Activated CD8-positive, alpha-beta memory T cell treated with anti-CD3 and anti-CD28 coated beads, Interleukin-2, amount 10 ng/mL, durations not matched to agents 7 days and 5 days (primary cell): ENCODE measurements at regions of chr2 and their contacts with region 1.

Region 1: DNA sequence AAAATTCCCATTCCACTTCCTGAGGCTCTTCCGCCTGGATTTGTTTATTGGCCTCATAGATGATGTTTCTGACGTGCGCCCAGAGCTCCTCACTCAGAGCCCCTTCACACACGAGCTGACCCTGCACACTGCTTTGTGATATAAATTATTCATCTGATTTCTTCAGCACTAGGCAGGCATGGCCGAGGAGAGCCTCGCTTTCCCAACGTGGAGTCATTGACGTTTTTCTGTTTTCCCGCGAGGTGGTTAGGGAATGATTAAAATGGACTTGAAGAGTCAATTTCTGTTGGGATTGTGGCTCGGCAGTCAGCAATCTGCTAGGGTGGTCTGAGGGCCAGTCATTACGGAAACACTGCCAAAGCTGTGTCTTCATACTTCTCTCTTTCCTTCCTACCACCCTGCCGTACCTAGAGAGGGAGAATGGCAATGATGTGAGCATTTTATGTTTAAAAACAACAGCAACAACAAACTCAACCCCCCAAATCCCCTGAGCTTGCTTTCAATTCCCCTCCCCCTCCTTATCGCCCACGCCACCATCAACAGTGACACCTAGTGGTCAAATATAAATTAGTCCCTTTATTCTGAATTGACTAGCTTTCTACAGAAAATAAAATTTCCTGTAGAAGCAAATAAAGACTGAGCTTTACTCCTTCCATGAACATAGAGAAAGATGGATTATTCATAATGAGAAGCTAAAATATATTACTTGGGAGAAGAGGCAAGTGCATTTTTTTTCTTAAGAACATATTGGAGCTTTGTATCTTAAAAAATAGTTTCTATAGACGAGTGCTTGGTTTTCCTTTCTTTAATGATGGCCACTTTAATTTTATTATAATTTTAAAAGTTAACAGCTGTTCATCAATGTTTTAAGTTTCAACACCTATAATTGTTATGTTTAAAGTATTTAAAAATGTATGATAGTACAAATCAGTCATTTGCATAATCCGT is 285.1 kb downstream of the MTX2 start:
- DNase-seq: peak; percentile 50
- ATAC-seq: peak; percentile 39
- H3K4me3 Mint-ChIP-seq: peak overlapping the region; percentile 59
- H3K27ac Mint-ChIP-seq: no peak overlapping the region
- H3K4me1 Mint-ChIP-seq: peaks cover 13% of the 10 kb centered on the region
- H3K27me3 Mint-ChIP-seq: peaks cover 58% of the 10 kb centered on the region

Region 2: GRCh38 chr2:176126929-176127773 is 427.2 kb before region 1 on chr2:
- CTCF ChIA-PET with region 1: interaction called, 10 read pairs
- DNase-seq: peak; percentile 68
- ATAC-seq: no peak
- H3K4me3 Mint-ChIP-seq: no peak overlapping the region
- H3K27ac Mint-ChIP-seq: no peak overlapping the region
- H3K4me1 Mint-ChIP-seq: peaks cover 7% of the 10 kb centered on the region
- H3K27me3 Mint-ChIP-seq: peaks cover 84% of the 10 kb centered on the region

Region 3: GRCh38 chr2:176454893-176455811 is 99.2 kb before region 1 on chr2:
- CTCF ChIA-PET with region 1: interaction called, 35 read pairs
- DNase-seq: peak; percentile 83
- ATAC-seq: peak; percentile 72
- H3K4me3 Mint-ChIP-seq: no peak overlapping the region
- H3K27ac Mint-ChIP-seq: no peak overlapping the region
- H3K4me1 Mint-ChIP-seq: peaks cover 1% of the 10 kb centered on the region
- H3K27me3 Mint-ChIP-seq: peaks cover 40% of the 10 kb centered on the region

Region 4: GRCh38 chr2:176638167-176639015 is 84.0 kb after region 1 on chr2:
- CTCF ChIA-PET with region 1: interaction called, 23 read pairs
- DNase-seq: peak; percentile 70
- ATAC-seq: peak; percentile 92
- H3K4me3 Mint-ChIP-seq: peak overlapping the region; percentile 60
- H3K27ac Mint-ChIP-seq: no peak overlapping the region
- H3K4me1 Mint-ChIP-seq: peaks cover 11% of the 10 kb centered on the region
- H3K27me3 Mint-ChIP-seq: peaks cover 70% of the 10 kb centered on the region

Region 5: DNA sequence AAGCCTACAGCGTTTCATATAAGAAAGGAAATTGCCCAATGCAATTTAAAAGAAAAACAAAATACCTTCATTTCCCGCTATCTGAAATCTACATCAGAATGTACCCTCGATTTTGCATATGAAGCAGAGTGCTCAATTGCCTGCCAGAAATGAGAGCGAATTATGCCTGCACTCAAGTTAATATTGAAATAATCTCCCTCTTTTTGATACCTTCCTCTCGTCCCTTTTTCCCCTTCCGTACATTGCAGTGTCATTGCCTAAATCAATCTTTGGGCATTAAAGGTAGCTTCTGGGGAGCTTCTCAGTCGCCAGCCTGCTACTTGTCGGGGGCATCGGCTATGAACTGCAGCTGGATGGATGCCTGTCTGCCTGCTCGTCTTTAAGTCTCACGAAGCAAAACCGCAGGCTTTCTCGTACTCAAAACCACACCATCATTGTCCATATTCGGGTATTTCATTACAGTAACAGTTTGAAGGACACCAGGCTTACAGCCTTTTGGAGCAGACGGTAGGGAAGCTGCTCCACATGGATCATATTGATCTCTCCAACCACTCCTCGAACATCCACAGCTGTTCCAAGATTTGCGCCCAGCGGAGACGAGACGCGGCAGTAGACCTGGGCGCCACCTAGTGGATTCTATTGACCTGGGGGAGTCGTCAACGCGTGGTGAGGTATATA is 594.2 kb after region 1 on chr2:
- CTCF ChIA-PET with region 1: interaction called, 12 read pairs
- DNase-seq: peak; percentile 86
- ATAC-seq: peak; percentile 97
- H3K4me3 Mint-ChIP-seq: peak overlapping the region; percentile 88
- H3K27ac Mint-ChIP-seq: peak overlapping the region; percentile 67
- H3K4me1 Mint-ChIP-seq: peaks cover 25% of the 10 kb centered on the region
- H3K27me3 Mint-ChIP-seq: peaks cover 61% of the 10 kb centered on the region